Heart right ventricle (tissue), 16 donors: ENCODE measurements at regions of chr1 and their contacts with region 1.

Region 1: GRCh38 chr1:204828338-204828850 is 42.3 kb upstream of the NFASC start:
- DNase-seq: peak; percentile 75 to 79
- ATAC-seq: peak; percentile 93 to 97 (median 96)
- H3K4me3 ChIP-seq: peak overlapping the region in 9 of 10 donors; percentile 44 to 69 (median 55)
- H3K27ac ChIP-seq: peak overlapping the region in 7 of 10 donors; percentile 11 to 69 (median 34)
- H3K4me1 ChIP-seq: peaks cover 0 to 22% (median 5%) of the 10 kb centered on the region in 9 donors
- H3K27me3 ChIP-seq: peaks cover 0 to 30% (median 0%) of the 10 kb centered on the region in 7 donors
- CTCF ChIP-seq: peak in 6 of 9 donors; percentile 8 to 54 (median 42)

Region 2: DNA sequence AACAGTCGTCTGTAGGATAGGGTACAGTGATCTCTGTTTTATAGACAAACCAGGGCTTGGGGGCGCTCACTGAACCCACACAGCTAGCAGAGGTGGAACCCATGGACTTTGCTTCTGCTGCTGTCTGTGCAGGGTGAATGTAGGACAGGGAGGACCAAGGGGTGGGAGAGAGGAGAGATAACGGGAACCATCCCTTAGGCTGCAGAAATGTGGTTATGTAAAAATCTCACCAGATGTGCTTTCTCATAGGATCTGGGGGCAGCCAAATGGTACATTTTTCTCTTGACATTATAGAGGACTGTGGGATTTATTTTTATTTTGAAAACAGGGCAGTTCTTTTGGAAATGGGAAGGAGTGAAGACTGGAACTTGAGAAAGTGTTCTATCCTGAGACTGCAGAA is 51.0 kb after region 1 on chr1:
- intact Hi-C with region 1: loop called in 1 of 10 experiments (anchors 5 kb)
- DNase-seq: no peak
- ATAC-seq: peak in 7 of 8 donors; percentile 54 to 88 (median 75)
- H3K4me3 ChIP-seq: peak overlapping the region in 2 of 10 donors; percentile 23 to 32
- H3K27ac ChIP-seq: peak overlapping the region in 6 of 10 donors; percentile 41 to 71 (median 59)
- H3K4me1 ChIP-seq: peaks cover 0 to 48% (median 8%) of the 10 kb centered on the region in 9 donors
- H3K27me3 ChIP-seq: peaks cover 0 to 7% (median 0%) of the 10 kb centered on the region in 7 donors
- CTCF ChIP-seq: no peak